Right ventricle myocardium inferior (tissue), 1 donor: ENCODE measurements at regions of chr21 and their contacts with region 1.

Region 1: DNA sequence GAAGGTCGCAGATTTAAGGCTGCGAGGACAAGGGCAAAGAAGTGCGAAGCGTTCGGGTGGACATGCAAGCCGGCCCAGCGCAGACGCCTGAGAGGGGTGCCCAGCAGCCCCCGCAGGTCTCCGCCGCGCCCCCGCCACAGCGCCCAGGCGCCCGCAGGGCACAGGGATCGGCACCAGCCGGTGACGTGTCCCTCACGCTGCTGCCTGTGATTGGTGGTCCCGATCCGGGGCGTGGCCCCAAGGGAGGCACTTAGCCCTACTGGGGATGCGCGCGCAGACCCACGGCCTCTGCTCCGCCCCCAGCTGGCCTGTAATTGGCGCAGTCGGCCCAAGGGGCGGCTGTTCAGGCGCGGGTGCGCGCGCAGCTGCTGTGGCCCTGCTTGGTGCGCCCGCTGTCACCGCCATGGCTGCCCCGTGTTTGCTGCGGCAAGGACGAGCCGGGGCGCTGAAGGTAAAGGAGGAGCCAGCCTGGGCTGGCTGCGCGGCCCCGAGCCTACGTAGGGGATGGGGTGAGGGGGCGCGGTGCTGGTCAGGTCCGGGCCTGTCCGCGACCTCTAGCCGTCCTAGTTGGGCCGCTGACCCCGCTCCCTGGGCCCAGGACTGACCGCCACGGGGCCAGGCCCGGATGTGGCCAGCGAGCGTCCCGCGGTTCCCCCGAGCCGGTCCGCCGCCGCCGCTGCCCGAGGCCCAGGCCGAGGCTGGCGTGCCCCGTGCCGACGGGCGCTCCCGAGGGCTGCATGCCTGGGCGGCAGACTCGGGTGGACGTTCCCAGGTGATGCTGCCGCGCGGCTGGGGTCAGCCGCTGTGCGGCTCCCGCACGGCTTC is at the start of gene NDUFV3:
- DNase-seq: peak; percentile 100
- ATAC-seq: peak; percentile 98
- total RNA-seq, gene NDUFV3: 61.0 TPM

Region 2: GRCh38 chr21:42973991-42974831 is 81.1 kb after region 1 on chr21 and contains the start of gene PKNOX1:
- intact Hi-C with region 1: loop called (anchors 5 kb)
- DNase-seq: peak; percentile 100
- ATAC-seq: peak; percentile 97
- total RNA-seq, gene PKNOX1: 9.7 TPM